A673 (cell line): ENCODE measurements at regions of chr5 and their contacts with region 1.

Region 1: DNA sequence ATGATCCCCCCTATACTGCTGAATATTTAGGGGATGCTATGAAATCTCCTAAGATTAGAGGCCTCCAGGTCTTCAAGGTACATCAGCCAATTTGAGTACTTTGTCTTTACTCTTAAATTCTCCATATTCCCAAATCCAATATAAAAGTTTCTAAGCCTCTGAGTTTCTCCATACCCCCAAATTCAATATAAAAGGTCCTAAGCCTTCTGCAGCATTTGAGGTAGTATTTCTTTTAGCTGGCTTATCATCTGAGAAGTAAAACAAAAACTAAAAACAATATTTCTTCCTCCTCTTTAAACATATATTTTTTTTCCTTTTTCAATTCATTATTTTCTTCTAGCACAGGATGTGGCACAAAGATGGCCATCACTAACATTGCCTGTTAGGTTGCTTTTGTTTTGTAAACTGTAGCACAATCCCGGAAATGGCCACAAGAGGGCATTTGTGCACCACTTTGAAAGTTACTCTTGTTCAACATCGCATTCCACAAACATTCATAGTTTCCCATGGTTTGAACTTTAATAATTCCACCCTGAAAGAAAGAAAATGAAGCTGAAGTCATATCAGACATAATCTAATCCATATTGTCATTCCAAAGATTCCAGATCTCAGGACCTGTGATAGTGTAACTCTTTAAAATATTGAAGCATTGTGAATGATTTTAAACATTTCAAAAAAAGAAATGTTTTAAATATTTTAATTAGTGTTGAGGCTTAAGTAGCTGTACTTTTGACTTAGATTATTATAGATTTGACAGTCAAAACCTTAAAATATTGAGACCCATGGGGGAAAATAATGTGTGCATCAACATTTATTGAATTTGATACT is 21.0 kb upstream of the SCGB3A2 start:
- DNase-seq: peak; percentile 81
- H3K4me3 ChIP-seq: no peak overlapping the region
- H3K27ac ChIP-seq: no peak overlapping the region
- H3K4me1 ChIP-seq: peaks cover 9% of the 10 kb centered on the region
- H3K27me3 ChIP-seq: no peaks in the 10 kb centered on the region
- CTCF ChIP-seq: peak; percentile 91

Region 2: GRCh38 chr5:147989977-147990376 is 132.5 kb after region 1 on chr5:
- CTCF ChIA-PET with region 1: interaction called, 3 read pairs
- POLR2A ChIA-PET with region 1: no interaction called
- intact Hi-C with region 1: loop called (anchors 5 kb)
- DNase-seq: no peak
- H3K4me3 ChIP-seq: no peak overlapping the region
- H3K27ac ChIP-seq: no peak overlapping the region
- H3K4me1 ChIP-seq: no peaks in the 10 kb centered on the region
- H3K27me3 ChIP-seq: peaks cover 83% of the 10 kb centered on the region
- CTCF ChIP-seq: no peak

Region 3: DNA sequence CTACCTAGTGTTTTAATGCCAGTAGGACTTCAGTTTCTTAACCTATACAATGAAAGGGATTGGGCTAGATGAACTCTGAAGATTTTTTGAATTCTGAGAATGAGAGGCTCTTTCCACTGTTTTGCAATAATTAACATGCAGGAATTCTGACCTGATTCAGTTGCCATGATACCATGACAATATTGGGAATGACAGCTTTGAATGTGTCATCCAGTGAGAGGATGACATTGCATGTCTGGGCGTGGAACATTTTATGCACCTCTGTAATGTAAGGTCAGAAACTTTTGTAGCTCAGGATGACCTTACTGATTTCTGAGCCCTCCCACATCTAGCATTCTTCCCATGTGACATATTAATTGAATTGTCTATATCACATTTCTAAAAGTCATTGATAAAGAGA is 175.6 kb after region 1 on chr5:
- CTCF ChIA-PET with region 1: no interaction called
- POLR2A ChIA-PET with region 1: no interaction called
- intact Hi-C with region 1: no loop called
- DNase-seq: no peak
- H3K4me3 ChIP-seq: no peak overlapping the region
- H3K27ac ChIP-seq: no peak overlapping the region
- H3K4me1 ChIP-seq: no peaks in the 10 kb centered on the region
- H3K27me3 ChIP-seq: no peaks in the 10 kb centered on the region
- CTCF ChIP-seq: no peak